ENCODE measurements at regions of chr2 and their contacts with region 1.

Region 1: GRCh38 chr2:68751397-68752339 is 17.1 kb downstream of the ARHGAP25 start:
- DNase-seq: peak; percentile 95
- H3K4me3 Mint-ChIP-seq: peak overlapping the region; percentile 30
- H3K27ac Mint-ChIP-seq: peak overlapping the region; percentile 79
- H3K4me1 Mint-ChIP-seq: peaks cover 85% of the 10 kb centered on the region
- H3K27me3 Mint-ChIP-seq: no peaks in the 10 kb centered on the region

Region 2: DNA sequence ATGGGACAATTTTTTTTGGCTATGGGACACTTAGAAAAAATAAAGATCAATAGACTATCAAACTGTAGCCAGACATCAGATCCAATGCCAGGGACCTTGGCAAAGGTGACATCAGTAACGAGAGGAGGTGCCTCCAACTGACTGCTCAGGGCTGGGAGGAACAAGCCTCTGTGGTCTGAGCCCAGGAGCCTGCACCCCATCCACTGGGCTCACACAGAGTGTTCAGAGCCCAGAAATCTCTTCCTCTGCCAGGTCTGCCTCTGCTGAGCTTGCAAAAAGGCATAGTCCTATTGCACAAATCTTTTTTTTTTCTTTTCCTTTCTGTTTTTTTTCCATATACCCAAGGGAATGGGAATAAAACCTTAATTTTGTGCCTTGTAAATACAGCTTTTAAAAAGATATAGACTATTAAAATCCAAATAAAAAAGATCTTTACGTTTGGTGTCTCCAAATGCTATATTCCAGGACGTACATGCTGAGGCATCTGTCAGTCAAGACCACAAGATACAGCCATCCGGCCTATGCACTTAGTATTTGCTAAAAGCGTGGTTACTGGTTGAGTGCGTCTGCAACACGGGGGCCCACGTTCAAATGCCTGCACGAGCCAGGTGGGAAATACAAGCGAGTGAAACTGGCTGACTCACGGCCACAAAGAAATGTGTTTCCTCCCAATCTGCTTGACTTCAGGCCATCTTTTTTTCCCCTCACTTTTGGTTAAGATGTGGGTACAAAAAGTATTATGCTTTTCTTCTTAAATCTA is 24.9 kb before region 1 on chr2:
- CTCF ChIA-PET with region 1: interaction called, 57 read pairs
- POLR2A ChIA-PET with region 1: interaction called, 3 read pairs
- intact Hi-C with region 1: no loop called
- DNase-seq: peak; percentile 93
- H3K4me3 Mint-ChIP-seq: peak overlapping the region; percentile 28
- H3K27ac Mint-ChIP-seq: peak overlapping the region; percentile 88
- H3K4me1 Mint-ChIP-seq: peaks cover 77% of the 10 kb centered on the region
- H3K27me3 Mint-ChIP-seq: no peaks in the 10 kb centered on the region

Region 3: GRCh38 chr2:68766376-68766845 is 14.7 kb after region 1 on chr2:
- CTCF ChIA-PET with region 1: interaction called, 161 read pairs
- POLR2A ChIA-PET with region 1: interaction called, 10 read pairs
- intact Hi-C with region 1: loop called (anchors 1 kb)
- DNase-seq: peak; percentile 81
- H3K4me3 Mint-ChIP-seq: peak overlapping the region; percentile 76
- H3K27ac Mint-ChIP-seq: peak overlapping the region; percentile 98
- H3K4me1 Mint-ChIP-seq: peaks cover 96% of the 10 kb centered on the region
- H3K27me3 Mint-ChIP-seq: no peaks in the 10 kb centered on the region

Region 4: DNA sequence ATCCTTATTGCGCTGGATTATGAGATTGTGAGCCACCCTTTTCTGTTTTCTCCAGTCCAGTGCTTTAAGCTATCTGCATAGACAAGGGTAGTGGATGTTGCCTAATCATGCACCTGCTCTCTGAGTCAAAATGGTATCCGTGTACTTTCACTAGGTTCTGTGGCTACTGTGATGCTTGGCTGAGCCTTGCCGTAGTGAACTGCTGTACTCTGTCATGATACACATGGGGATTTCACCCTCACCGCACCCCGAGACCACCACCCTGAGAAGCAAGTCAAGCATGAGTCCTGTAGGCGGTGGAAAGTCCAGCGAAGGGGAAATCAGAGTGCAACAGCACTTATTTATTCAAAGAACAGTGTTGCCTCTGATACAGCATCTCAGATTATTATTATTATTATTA is 37.9 kb after region 1 on chr2:
- CTCF ChIA-PET with region 1: interaction called, 23 read pairs
- POLR2A ChIA-PET with region 1: interaction called, 3 read pairs
- intact Hi-C with region 1: loop called (anchors 5 kb)
- DNase-seq: peak; percentile 83
- H3K4me3 Mint-ChIP-seq: no peak overlapping the region
- H3K27ac Mint-ChIP-seq: peak overlapping the region; percentile 25
- H3K4me1 Mint-ChIP-seq: peaks cover 53% of the 10 kb centered on the region
- H3K27me3 Mint-ChIP-seq: no peaks in the 10 kb centered on the region

Region 5: DNA sequence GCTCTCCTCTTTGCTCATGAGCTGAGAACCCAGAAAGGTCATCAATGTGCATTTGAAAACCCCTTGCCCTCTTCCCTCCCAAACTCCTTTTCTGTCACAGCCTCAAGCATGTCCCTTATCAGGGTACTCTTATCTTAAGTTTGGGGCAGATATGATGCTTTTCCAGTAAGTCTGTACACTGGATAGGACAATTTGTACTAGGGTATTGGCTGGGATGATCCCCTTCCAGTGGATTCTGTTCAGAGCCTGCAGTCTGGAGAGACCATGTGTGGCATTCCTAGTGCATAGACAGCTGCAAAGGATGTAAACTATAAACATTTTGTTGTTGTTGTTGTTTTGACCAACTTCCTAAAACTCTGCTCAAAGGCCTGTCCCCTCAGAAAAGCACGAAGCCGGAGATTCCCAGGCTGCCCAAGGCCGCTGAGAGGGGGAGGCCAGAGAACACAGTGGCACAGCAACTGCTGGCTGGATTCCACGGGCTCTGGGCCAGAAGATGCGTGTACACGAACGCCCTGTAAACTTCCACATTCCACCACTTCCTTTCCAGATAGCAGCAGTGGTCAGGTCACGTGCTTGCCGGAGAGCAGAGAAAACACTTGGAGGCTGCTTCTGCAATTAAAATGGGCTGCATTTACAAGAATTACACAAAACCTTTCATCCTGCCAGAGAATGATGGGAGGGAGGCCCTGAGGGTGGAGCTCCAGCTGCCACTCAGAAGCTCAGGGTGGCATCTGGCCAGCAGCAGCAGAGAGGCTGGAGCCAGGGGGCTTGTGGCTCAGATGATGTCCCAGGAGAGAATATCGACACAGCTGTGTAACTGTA is 77.4 kb after region 1 on chr2:
- CTCF ChIA-PET with region 1: interaction called, 53 read pairs
- POLR2A ChIA-PET with region 1: interaction called, 3 read pairs
- intact Hi-C with region 1: no loop called
- DNase-seq: peak; percentile 86
- H3K4me3 Mint-ChIP-seq: peak overlapping the region; percentile 21
- H3K27ac Mint-ChIP-seq: peak overlapping the region; percentile 79
- H3K4me1 Mint-ChIP-seq: peaks cover 64% of the 10 kb centered on the region
- H3K27me3 Mint-ChIP-seq: no peaks in the 10 kb centered on the region

Region 6: DNA sequence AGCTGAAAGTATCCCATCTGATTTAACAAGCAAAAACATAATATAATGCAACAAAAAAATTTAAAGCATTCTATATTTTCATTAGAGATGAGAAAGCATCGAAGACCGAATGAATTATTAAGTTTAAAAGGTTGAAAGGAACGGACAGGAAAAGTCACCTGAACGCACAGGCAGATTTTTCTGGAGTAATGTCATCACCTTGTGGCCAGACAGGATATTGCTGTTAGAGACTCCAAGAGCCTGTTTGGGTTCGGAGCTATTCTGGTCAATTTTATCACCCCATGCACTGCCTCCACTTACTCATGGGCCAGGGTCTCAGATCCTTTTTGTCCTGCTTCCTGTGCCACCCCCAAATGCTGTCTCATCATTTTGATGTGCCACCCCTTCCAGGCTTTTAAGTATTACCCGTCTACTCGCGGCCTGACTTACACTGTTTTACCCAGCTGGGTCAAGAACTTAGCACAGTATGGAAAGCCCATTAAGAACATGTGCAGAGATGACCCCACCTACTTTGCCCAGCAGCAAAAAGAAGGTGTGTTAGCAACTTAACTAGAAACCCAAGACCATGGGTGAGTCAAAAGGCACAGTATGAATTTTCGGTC is 173.7 kb after region 1 on chr2:
- CTCF ChIA-PET with region 1: interaction called, 76 read pairs
- POLR2A ChIA-PET with region 1: no interaction called
- intact Hi-C with region 1: loop called (anchors 1 kb)
- DNase-seq: peak; percentile 57
- H3K4me3 Mint-ChIP-seq: no peak overlapping the region
- H3K27ac Mint-ChIP-seq: no peak overlapping the region
- H3K4me1 Mint-ChIP-seq: peaks cover 6% of the 10 kb centered on the region
- H3K27me3 Mint-ChIP-seq: no peaks in the 10 kb centered on the region

Region 7: GRCh38 chr2:69589973-69590652 is 838.4 kb after region 1 on chr2:
- CTCF ChIA-PET with region 1: no interaction called
- POLR2A ChIA-PET with region 1: no interaction called
- intact Hi-C with region 1: no loop called
- DNase-seq: no peak
- H3K4me3 Mint-ChIP-seq: no peak overlapping the region
- H3K27ac Mint-ChIP-seq: peak overlapping the region; percentile 18
- H3K4me1 Mint-ChIP-seq: peaks cover 76% of the 10 kb centered on the region
- H3K27me3 Mint-ChIP-seq: no peaks in the 10 kb centered on the region

Measured in activated CD4-positive, alpha-beta memory T cell treated with anti-CD3 and anti-CD28 coated beads for 36 hours (primary cell).